Gastrocnemius medialis (tissue), 4 donors: ENCODE measurements at regions of chr12 and their contacts with region 1.

Region 1: GRCh38 chr12:113261847-113262470 is 40.7 kb downstream of the TPCN1 start:
- DNase-seq: no peak
- ATAC-seq: no peak
- H3K4me3 ChIP-seq: no peak overlapping the region
- H3K27ac ChIP-seq: peak overlapping the region; percentile 82 to 91 (median 86)
- H3K4me1 ChIP-seq: peaks cover 45% of the 10 kb centered on the region in 2 donors
- H3K27me3 ChIP-seq: no peaks in the 10 kb centered on the region
- CTCF ChIP-seq: no peak
- POLR2A ChIP-seq: no peak

Region 2: GRCh38 chr12:112012775-112013600 is 1249.0 kb before region 1 on chr12 and contains the starts of genes ERP29 and TMEM116:
- in situ Hi-C with region 1: no loop called
- intact Hi-C with region 1: no loop called
- DNase-seq: peak; percentile 99 to 100
- ATAC-seq: peak; percentile 87 to 88
- H3K4me3 ChIP-seq: peak within 1 kb of the TSS; percentile 89 to 98 (median 96)
- H3K27ac ChIP-seq: peak within 1 kb of the TSS; percentile 93 to 98 (median 97)
- H3K4me1 ChIP-seq: peaks cover 24 to 31% of the 10 kb centered on the region in 2 donors
- H3K27me3 ChIP-seq: no peaks in the 10 kb centered on the region
- CTCF ChIP-seq: peak; percentile 72 to 81 (median 78)
- POLR2A ChIP-seq: peak; percentile 96 to 97
- total RNA-seq, gene ERP29: 9.9 to 20.9 (median 16.8) TPM
- total RNA-seq, gene TMEM116: 1.9 to 8.5 (median 4.3) TPM

Region 3: GRCh38 chr12:113221181-113221997 is 40.6 kb before region 1 on chr12 and contains the start of gene TPCN1:
- in situ Hi-C with region 1: no loop called
- intact Hi-C with region 1: loop called (anchors 2 kb)
- DNase-seq: peak; percentile 100
- ATAC-seq: peak; percentile 86 to 93
- H3K4me3 ChIP-seq: peak within 1 kb of the TSS; percentile 72 to 89 (median 80)
- H3K27ac ChIP-seq: peak within 1 kb of the TSS; percentile 92 to 99 (median 96)
- H3K4me1 ChIP-seq: peaks cover 37 to 41% of the 10 kb centered on the region in 2 donors
- H3K27me3 ChIP-seq: no peaks in the 10 kb centered on the region
- CTCF ChIP-seq: peak in 4 of 5 experiments; percentile 7 to 13 (median 12)
- POLR2A ChIP-seq: peak; percentile 99 to 100
- total RNA-seq, gene TPCN1: 21.4 to 27.0 (median 25.4) TPM

Region 4: GRCh38 chr12:113246478-113247122 is 15.4 kb before region 1 on chr12:
- in situ Hi-C with region 1: no loop called
- intact Hi-C with region 1: loop called (anchors 1 kb)
- DNase-seq: no peak
- ATAC-seq: no peak
- H3K4me3 ChIP-seq: peak overlapping the region in 1 of 4 donors; percentile 15
- H3K27ac ChIP-seq: peak overlapping the region; percentile 92 to 99 (median 96)
- H3K4me1 ChIP-seq: peaks cover 65 to 83% of the 10 kb centered on the region in 2 donors
- H3K27me3 ChIP-seq: no peaks in the 10 kb centered on the region
- CTCF ChIP-seq: no peak
- POLR2A ChIP-seq: no peak